A673 (cell line): ENCODE measurements at regions of chr7 and their contacts with region 1.

Region 1: DNA sequence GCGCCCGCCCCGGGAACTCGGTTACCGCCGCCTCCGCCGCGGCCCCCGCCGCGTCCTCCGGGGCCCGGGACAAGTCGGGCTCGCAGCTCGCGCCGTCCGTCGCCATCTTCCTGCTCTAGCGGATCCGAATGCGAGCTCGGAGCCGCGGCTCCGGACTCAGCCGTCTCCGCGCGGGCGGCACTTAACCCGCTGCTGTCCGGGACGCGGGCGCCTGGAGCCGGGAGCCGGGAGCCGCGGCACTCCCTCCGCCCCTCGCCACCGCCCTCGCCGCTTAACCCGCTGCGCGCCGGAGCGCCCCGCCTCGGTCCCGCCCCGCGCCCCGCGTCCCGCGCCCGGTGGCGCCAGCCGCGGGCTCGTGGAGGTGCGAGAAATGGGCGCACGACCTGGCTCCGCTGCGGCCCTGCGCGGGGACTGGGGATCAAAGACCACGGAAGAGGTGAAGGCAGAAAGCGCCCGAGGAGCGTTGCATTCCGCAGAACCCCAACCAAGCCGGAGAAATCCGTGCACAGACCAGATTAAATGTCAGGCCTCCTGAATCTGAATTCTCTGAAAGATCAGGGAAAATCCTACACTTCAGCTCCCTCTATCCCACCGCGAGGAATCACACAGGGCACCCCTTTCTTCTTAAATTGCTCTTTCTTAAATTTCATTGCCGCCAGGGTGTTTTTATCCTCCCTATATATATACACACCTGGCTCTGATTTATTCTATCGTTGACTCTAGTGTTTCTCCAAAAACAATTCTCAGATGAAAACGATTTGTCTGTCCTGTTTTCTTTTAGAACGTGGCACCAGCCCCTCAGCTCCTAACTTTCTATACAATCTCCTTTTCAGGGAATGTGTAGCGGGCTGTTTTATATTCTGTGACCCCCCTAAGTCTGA is at the start of gene CTTNBP2:
- DNase-seq: peak; percentile 65
- H3K4me3 ChIP-seq: peak within 1 kb of the TSS; percentile 85
- H3K27ac ChIP-seq: peak within 1 kb of the TSS; percentile 85
- H3K4me1 ChIP-seq: peaks cover 59% of the 10 kb centered on the region
- H3K27me3 ChIP-seq: no peaks in the 10 kb centered on the region
- CTCF ChIP-seq: peak; percentile 16; the same call in 1 of the 2 replicates
- total RNA-seq, gene CTTNBP2: 21.8 and 26.3 TPM in 2 replicates

Region 2: GRCh38 chr7:116045532-116045931 is 1828.0 kb before region 1 on chr7:
- CTCF ChIA-PET with region 1: no interaction called
- POLR2A ChIA-PET with region 1: no interaction called
- intact Hi-C with region 1: no loop called
- DNase-seq: no peak
- H3K4me3 ChIP-seq: no peak overlapping the region
- H3K27ac ChIP-seq: no peak overlapping the region
- H3K4me1 ChIP-seq: no peaks in the 10 kb centered on the region
- H3K27me3 ChIP-seq: no peaks in the 10 kb centered on the region
- CTCF ChIP-seq: no peak

Region 3: GRCh38 chr7:117949232-117949631 is 75.7 kb after region 1 on chr7:
- CTCF ChIA-PET with region 1: no interaction called
- POLR2A ChIA-PET with region 1: no interaction called
- intact Hi-C with region 1: loop called (anchors 5 kb)
- DNase-seq: no peak
- H3K4me3 ChIP-seq: no peak overlapping the region
- H3K27ac ChIP-seq: no peak overlapping the region
- H3K4me1 ChIP-seq: no peaks in the 10 kb centered on the region
- H3K27me3 ChIP-seq: no peaks in the 10 kb centered on the region
- CTCF ChIP-seq: 0 out of 2 replicates have a peak, but pooled peaks have one; percentile 17

Region 4: DNA sequence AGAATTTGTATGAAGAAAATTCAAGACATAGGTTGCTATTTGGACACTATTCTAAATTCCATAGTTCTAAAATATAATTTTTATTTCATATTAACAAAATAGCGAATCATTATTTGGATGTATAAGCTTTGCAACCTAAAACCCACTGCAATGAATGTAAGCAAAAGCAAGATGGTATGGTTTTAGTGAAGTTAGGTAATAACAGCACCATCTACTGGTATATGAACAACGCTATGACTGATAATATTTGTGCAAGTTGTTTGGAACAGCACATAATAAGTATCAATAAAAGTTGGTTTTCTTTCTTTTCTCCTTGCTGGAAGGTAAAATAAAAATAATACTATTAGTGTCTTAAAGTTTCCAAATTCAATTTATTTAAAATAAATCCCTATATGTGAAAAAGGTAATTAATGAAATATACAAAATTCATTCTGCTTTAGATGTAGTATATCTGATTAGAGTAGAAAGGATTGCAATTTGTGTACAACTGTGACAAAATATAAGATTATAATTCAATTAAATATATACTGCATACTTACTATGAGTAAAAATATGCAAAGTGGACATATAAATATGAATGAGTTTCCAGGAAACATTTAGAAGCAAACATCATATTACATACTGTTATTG is 231.4 kb after region 1 on chr7:
- CTCF ChIA-PET with region 1: interaction called, 6 read pairs
- POLR2A ChIA-PET with region 1: no interaction called
- intact Hi-C with region 1: loop called (anchors 5 kb)
- DNase-seq: peak; percentile 68
- H3K4me3 ChIP-seq: no peak overlapping the region
- H3K27ac ChIP-seq: no peak overlapping the region
- H3K4me1 ChIP-seq: peaks cover 21% of the 10 kb centered on the region
- H3K27me3 ChIP-seq: no peaks in the 10 kb centered on the region
- CTCF ChIP-seq: peak; percentile 79